Cardiac septum (tissue), 1 donor: ENCODE measurements at regions of chr6 and their contacts with region 1.

Region 1: GRCh38 chr6:132768051-132768517 is 10.4 kb upstream of the VNN2 start:
- DNase-seq: no peak

Region 2: GRCh38 chr6:132669690-132670291 is 98.3 kb before region 1 on chr6:
- intact Hi-C with region 1: loop called (anchors 5 kb)
- DNase-seq: no peak

Region 3: DNA sequence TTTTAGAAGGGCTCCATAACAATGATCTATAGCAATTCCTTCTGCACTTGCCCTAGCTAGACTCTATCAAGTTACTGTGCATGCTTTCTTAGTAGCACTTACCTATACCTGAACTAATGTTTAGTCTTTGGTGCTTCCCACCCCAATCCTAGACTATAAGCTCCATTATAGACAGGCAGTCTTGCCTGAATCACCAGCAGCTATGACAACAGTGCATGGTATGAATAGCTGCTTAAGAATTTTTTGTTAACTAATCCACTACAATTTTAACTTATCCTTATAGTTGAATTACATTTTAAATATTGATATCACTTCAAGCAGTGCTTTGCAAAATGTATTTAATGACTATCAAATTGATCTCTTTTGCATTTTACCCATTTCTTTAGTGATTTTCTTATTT is 210.6 kb after region 1 on chr6:
- intact Hi-C with region 1: no loop called
- DNase-seq: no peak